GM10248 (cell line): ENCODE measurements at regions of chr17 and their contacts with region 1.

Region 1: GRCh38 chr17:43576563-43577229 is 30.6 kb upstream of the ETV4 start:
- DNase-seq: peak; percentile 76
- CTCF ChIP-seq: peak; percentile 88

Region 2: GRCh38 chr17:43591779-43592562 is 15.3 kb after region 1 on chr17:
- CTCF ChIA-PET with region 1: interaction called, 30 read pairs
- POLR2A ChIA-PET with region 1: no interaction called
- DNase-seq: no peak
- CTCF ChIP-seq: no peak

Region 3: DNA sequence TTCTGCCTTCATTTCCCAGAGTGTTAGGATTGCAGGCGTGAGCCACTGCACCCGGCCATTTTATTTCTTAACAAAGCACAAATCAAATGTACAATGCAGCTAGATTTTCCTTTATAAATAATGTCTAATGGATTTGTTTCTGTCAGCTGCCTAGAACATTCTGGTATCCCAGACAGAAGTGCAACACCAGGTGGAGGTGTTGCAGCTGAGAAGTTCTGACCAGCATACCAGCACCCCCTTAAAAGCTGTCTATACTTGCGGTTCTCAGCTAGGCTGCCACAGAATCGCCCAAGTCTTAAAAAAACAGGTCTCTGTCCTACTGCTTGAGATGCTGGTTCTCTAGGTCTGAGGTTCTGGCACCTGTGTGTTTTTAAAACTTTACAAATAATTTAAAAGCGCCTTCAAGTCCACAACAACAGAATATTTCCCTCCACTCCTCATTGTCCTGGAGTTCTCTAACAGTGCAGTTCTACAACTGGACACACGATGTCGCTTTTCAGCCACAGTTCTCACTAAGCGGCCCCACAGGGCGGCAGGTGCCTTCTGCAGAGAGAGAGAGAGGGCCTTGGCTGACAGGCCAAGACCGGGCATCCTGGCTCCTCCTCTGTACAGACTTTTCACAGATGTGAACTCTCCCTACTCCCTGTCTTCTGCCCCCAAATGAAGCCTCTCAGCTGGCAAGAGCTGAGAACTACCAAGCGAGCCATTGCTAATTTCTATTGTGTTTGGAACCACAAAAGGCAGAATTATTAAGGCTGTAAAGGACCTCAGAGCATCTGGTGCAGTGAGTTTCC is 117.6 kb after region 1 on chr17:
- CTCF ChIA-PET with region 1: interaction called, 25 read pairs
- POLR2A ChIA-PET with region 1: no interaction called
- DNase-seq: peak; percentile 80
- CTCF ChIP-seq: peak; percentile 97

Region 4: DNA sequence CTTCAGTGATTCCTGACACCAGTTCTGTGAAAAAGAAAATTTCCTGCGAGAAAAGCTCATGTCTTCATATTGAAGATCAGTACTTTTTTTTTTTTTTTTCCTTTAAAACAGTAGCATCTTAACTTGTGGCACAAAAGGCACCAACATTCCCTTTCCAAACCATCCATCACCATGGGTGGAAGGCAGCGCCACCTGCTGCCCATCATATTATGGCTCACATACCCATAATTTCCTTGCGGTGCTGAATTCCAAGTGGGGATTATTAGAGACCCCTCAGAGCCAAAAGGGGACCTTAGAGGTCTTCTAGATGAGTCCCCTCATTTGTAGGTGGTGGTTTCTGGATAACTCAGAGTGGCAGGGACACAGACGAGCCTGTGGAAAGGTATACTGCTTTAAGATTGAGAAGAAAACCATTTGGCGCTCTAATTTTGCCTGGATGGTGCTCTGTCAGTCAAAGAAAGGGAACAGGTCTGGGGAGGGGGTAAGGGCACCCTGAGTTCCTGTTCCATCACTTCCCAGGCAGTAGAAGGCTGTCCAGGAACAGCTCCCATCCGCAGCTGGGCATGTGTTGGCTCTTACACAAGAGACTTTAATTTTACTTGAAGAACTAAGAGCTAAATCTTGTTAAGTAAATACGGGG is 189.8 kb after region 1 on chr17:
- CTCF ChIA-PET with region 1: interaction called, 79 read pairs
- POLR2A ChIA-PET with region 1: no interaction called
- DNase-seq: no peak
- CTCF ChIP-seq: peak; percentile 75